Endothelial cell of umbilical vein (primary cell): ENCODE measurements at regions of chr1 and their contacts with region 1.

Region 1: GRCh38 chr1:4126731-4127594 is 226.9 kb upstream of the C1orf174 start:
- DNase-seq: no peak
- H3K4me3 ChIP-seq: no peak overlapping the region
- H3K27ac ChIP-seq: no peak overlapping the region
- H3K4me1 ChIP-seq: no peaks in the 10 kb centered on the region
- H3K27me3 ChIP-seq: no peaks in the 10 kb centered on the region
- CTCF ChIP-seq: no peak
- POLR2A ChIP-seq: no peak

Region 2: DNA sequence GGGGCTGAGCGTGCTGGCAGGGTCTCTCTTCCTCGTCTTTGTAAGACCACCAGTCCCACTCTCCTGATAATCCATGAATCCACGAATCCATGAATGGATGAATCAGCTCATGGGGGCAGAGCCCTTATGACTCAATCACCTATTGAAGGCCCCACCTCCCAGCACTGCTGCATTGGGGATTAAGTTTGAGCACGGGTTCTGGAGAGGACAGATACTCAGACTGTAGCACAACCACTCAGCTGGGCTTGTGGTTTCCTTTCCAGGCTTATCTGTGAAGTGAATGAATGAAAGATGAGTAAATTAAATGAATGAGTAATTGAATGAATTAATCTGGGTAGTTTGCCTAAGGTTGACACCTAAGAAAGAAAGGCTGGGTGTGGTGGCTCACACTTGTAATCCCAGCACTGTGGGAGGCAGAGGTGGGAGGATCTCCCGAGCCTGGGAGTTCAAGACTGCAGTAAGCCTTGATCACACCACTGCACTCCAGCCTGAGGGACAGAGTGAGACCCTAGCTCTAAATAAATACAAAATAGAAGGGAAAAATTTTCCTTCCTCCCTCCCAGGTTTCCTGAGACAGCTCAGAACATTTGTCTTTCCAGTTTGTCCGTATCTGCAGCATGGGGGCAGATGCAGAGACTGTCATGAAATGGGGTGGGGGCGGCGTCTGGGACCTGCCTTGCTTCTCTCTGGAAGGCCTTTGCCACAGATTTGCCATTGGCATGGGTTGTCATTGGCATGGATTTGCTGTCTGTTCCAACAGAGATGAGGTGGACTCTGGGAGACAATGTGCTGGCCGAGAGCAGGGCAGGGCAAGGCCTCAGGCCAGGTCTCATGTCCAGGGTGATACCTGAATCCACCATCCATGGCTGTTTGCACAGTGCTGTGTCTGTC is 39.2 kb before region 1 on chr1:
- CTCF ChIA-PET with region 1: no interaction called
- POLR2A ChIA-PET with region 1: no interaction called
- dilution Hi-C with region 1: no loop called
- intact Hi-C with region 1: no loop called
- DNase-seq: no peak
- H3K4me3 ChIP-seq: no peak overlapping the region
- H3K27ac ChIP-seq: no peak overlapping the region
- H3K4me1 ChIP-seq: no peaks in the 10 kb centered on the region
- H3K27me3 ChIP-seq: no peaks in the 10 kb centered on the region
- CTCF ChIP-seq: no peak
- POLR2A ChIP-seq: no peak

Region 3: DNA sequence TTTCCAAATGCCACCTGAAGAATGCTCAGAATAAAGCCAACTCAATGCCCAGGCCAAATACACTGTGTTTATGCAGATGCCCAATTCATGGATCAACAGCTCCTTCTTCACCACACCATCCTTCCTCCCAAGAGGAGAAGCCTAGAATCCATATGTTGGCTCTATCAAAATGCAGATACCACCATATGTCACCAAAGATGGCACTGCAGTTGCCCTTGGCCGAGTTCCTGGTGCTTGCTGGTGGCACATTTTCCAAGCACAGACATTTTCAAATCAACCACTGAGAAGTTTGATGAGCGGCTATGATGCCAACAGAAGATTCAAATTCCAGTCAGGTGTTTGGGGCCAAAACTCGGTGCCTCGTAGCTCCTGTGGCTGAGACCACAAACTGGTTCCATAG is 957.7 kb after region 1 on chr1:
- CTCF ChIA-PET with region 1: no interaction called
- POLR2A ChIA-PET with region 1: no interaction called
- dilution Hi-C with region 1: no loop called
- intact Hi-C with region 1: loop called (anchors 5 kb)
- DNase-seq: no peak
- H3K4me3 ChIP-seq: no peak overlapping the region
- H3K27ac ChIP-seq: no peak overlapping the region
- H3K4me1 ChIP-seq: no peaks in the 10 kb centered on the region
- H3K27me3 ChIP-seq: no peaks in the 10 kb centered on the region
- CTCF ChIP-seq: no peak
- POLR2A ChIP-seq: no peak